ENCODE measurements at regions of chr3 and their contacts with region 1.

Region 1: DNA sequence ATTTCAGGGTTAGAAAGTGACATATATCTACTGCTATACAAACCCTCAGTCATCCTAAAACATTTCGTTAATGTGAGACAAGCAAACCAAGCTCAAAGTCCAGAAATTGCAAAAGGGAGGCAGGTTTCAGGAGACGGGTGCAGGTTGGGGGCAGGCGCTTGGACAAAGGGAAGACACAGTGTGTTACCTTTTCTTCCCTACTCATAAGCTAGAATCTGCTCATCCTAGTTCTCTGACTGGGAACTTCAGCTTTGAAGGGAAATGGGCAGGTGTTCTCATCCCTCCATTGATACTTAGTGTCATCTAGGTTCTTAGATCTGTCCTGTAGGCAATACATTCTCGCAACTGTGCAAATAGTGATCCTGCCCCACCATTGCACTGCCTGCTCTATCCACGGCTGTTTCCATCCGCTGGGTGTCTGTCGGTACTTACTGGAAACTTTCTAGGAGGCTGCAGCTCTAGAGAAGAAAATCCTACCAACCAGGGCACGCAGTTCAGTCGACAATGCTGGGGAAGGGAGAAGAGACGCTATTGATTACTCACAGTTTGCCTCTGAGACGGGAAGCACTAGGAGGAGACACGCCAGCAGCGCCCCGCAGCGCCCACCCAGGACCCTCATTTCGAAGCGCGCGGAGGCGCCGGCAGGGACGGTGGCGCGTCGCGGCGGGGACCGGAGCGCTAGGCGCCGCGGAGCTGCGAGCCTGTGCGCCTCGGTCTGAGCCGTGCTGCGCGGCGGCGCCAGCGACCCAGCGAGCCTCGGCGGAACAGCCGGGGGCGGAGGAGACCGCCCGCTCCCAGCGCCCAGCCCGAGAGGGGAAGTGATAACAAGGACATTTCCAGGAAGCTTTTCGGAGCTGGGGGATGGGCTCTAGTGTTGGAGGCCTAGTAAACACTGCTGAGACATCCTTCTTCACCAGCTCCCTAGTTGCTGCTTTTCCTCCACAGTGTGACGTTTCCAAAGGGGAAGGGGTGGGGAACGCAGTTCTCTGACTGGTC is at the start of gene PROS1:
- DNase-seq: peak; percentile 92
- H3K4me3 ChIP-seq: peak within 1 kb of the TSS; percentile 37 to 63 (median 60)
- H3K27ac ChIP-seq: peak within 1 kb of the TSS; percentile 82 to 91 (median 86)
- H3K4me1 ChIP-seq: peaks cover 0 to 14% (median 5%) of the 10 kb centered on the region in 4 donors
- H3K27me3 ChIP-seq: no peaks in the 10 kb centered on the region
- CTCF ChIP-seq: no peak
- EP300 ChIP-seq: no peak
- POLR2A ChIP-seq: no peak
- total RNA-seq, gene PROS1: 17.8 to 31.4 (median 24.8) TPM

Region 2: GRCh38 chr3:93910097-93910496 is 63.3 kb before region 1 on chr3:
- intact Hi-C with region 1: loop called (anchors 5 kb)
- DNase-seq: no peak
- H3K4me3 ChIP-seq: no peak overlapping the region
- H3K27ac ChIP-seq: no peak overlapping the region
- H3K4me1 ChIP-seq: peaks cover 0 to 21% (median 7%) of the 10 kb centered on the region in 4 donors
- H3K27me3 ChIP-seq: no peaks in the 10 kb centered on the region
- CTCF ChIP-seq: no peak
- EP300 ChIP-seq: peak in 1 of 4 donors; percentile 48
- POLR2A ChIP-seq: no peak

Measured in sigmoid colon (tissue), 7 donors.